ENCODE measurements at regions of chr1 and their contacts with region 1.

Region 1: DNA sequence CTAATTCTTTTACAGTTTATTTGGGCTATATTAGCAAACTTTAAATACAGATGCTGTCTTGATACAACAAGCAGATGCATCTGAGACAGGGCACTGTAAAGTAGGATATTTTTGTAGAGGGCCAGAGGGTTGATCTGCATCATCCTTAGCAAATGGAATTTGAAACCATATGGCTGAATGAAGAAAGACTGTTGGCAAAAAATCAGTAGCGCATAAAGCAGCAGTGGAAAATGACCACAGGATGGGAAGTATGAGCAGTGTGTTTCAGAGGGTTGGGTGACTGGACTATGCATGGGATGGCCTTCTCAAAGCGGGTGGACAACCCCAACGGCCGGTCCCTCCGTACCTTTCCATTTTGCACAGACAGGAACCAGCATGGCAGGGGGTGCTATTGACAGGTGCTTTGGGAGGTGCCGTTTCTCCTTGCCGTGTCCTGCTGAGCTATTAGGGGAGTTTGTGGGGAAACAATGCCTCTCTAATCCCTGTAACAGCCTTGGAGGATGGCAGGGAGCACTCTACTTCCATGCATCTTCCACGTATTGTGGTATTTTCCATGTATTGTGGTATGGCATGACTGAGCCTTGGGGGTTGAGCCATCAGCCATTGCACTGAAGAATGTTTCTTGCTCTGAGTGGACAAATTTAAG is 5.9 kb downstream of the LRRC8B start:
- H3K4me3 Mint-ChIP-seq: no peak overlapping the region
- H3K27ac Mint-ChIP-seq: no peak overlapping the region
- H3K4me1 Mint-ChIP-seq: peaks cover 36% of the 10 kb centered on the region
- H3K27me3 Mint-ChIP-seq: no peaks in the 10 kb centered on the region

Region 2: DNA sequence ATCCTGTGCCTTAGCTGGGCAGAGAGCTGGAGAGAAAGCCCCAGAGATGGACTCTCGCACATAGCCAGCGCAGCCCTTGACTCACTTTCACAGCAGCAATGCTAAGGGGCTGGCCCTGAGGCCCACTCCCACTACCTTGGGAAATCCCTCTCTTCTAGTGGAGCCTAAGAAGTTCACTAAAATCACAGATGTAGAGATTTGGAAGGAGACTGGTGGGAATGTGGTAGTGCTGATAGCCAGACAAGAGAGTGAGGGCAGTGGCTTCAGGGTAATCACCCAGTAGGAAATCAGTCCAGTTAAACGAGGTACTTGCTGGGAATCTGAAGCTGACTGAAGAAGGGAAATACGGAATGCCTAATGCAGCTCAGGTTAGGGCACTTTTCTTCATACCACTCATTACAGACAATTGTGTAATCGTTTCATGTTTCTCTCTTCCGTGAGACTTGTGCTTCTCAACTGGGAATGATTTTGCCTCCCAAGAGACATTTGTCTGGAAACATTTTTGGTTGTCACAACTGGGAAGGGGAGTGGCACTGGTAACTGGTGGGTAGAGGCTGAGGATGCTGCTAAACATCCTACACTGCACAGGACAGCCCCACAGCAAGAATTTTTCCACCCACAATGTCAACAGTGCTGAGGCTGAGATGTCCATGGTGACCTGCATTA is 60.0 kb after region 1 on chr1:
- intact Hi-C with region 1: loop called (anchors 5 kb)
- H3K4me3 Mint-ChIP-seq: no peak overlapping the region
- H3K27ac Mint-ChIP-seq: no peak overlapping the region
- H3K4me1 Mint-ChIP-seq: peaks cover 42% of the 10 kb centered on the region
- H3K27me3 Mint-ChIP-seq: no peaks in the 10 kb centered on the region

Region 3: GRCh38 chr1:90104941-90105538 is 574.5 kb after region 1 on chr1:
- intact Hi-C with region 1: no loop called
- H3K4me3 Mint-ChIP-seq: no peak overlapping the region
- H3K27ac Mint-ChIP-seq: no peak overlapping the region
- H3K4me1 Mint-ChIP-seq: no peaks in the 10 kb centered on the region
- H3K27me3 Mint-ChIP-seq: peaks cover 3% of the 10 kb centered on the region